GM10248 (cell line): ENCODE measurements at regions of chr11 and their contacts with region 1.

Region 1: GRCh38 chr11:94588371-94588952 is 21.3 kb downstream of the PIWIL4 start:
- DNase-seq: no peak
- CTCF ChIP-seq: no peak

Region 2: DNA sequence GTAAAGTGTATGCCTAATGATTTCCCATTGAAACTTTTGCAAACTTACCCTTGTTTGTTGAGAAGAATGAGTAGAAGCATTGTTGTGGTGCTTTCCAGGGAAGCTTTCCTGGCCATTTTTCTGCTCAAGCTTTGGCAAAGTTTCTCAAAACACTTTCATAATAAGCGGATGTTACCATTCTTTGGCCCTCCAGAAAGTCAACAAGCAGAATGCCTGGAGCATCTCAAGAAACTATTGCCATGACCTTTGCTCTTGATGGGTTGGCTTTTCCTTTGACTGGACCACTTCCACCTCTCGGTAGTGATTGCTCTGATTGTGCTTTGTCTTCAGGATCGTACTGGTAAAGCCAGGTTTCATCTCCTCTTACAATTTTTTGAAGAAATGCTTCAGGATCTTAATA is 10.6 kb before region 1 on chr11:
- CTCF ChIA-PET with region 1: interaction called, 13 read pairs
- POLR2A ChIA-PET with region 1: no interaction called
- DNase-seq: no peak
- CTCF ChIP-seq: no peak

Region 3: GRCh38 chr11:94602430-94603372 is 14.2 kb after region 1 on chr11:
- CTCF ChIA-PET with region 1: interaction called, 21 read pairs
- POLR2A ChIA-PET with region 1: no interaction called
- DNase-seq: peak; percentile 52
- CTCF ChIP-seq: peak; percentile 37